K562 (cell line): ENCODE measurements at regions of chr5 and their contacts with region 1.

Region 1: DNA sequence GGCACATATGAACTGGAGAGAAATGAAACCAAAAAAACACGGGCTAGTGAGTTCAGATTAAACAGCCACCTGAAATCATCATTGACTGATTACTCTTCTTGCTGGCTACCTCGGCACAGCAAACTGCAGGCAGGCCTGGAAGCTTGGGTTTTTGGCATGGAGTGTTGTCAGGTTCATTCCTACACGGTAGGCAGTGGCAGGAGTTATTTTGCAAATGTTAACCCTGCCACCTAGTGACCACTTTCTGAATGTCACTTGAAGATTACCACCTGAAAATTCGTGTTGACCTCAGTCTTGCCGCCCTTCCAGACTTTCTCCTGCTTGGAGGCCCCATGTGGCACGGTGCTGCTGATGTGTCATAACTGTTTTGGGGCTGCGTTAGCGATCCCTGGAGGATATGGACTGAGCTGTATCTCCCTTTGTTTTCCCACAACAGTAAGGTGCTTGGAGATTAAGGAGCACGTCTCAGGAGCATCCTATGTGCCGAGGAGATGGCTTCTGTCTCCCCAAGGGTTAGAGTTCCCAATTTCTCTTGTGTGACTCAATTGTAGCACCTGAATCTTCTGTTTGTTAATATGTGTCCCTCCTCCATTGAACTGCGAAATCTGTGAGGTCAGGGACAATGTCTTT is 12.7 kb upstream of the CD180 start:
- DNase-seq: peak; percentile 60 to 76 (median 68)
- ATAC-seq: peak; percentile 88
- H3K4me3 ChIP-seq: no peak overlapping the region
- H3K27ac ChIP-seq: no peak overlapping the region
- H3K4me1 ChIP-seq: no peaks in the 10 kb centered on the region
- H3K27me3 ChIP-seq: peaks cover 8 to 25% of the 10 kb centered on the region in 2 experiments
- CTCF ChIP-seq: peak; percentile 71 to 85 (median 75)
- EP300 ChIP-seq: no peak
- POLR2A ChIP-seq: no peak
- RAD21 ChIP-seq: peak; percentile 78 to 89

Region 2: DNA sequence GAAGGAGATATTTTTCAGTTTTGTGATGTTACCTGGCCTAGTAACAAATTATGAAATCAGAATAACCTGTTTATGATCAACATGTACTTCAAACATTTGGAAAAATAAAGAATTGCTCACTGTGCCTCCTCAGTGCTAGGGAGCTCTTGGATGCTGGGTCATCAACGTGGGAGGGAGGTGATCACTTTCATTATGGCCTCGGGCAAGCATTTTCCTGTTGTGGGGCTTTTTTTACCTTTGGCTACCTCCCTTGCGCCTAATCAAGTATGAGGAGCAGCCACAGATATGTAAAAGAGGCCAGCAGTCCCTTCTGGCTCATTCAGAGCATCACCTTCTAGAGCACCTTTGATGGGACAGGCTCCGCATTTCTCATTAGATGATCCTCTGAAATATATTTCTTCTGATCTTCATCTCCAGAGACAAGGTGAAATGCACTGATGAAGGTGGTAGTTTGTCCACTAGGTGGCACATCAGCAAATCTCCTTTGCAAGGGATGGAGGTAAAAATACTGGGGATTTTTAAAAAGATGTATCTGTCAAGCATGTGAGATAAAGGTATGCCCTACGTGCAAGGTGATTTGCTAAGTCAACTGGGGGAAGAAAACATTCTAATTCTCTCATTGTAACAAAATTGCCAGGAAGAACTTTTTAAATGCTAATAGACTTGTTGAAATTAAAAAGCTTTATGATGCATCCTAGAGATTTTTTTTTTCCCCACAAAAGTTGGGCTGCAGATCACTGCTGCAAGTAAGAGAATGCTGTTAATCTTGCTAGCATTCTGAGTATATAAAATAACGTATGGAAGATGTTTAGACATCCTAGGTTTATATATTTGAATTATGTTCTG is 394.9 kb before region 1 on chr5:
- CTCF ChIA-PET with region 1: interaction called, 14 read pairs
- POLR2A ChIA-PET with region 1: no interaction called
- in situ Hi-C with region 1: no loop called
- intact Hi-C with region 1: loop called (anchors 1 kb)
- DNase-seq: peak; percentile 42 to 52 (median 48)
- ATAC-seq: peak; percentile 77
- H3K4me3 ChIP-seq: no peak overlapping the region
- H3K27ac ChIP-seq: no peak overlapping the region
- H3K4me1 ChIP-seq: no peaks in the 10 kb centered on the region
- H3K27me3 ChIP-seq: peaks cover 0 to 6% of the 10 kb centered on the region in 2 experiments; a peak in 2 of 5 replicates
- CTCF ChIP-seq: peak; percentile 46 to 67 (median 63); a peak in 5 of 6 replicates
- EP300 ChIP-seq: no peak
- POLR2A ChIP-seq: no peak
- RAD21 ChIP-seq: peak; percentile 50 to 60

Region 3: GRCh38 chr5:67156976-67157583 is 52.2 kb before region 1 on chr5:
- CTCF ChIA-PET with region 1: interaction called, 23 read pairs
- POLR2A ChIA-PET with region 1: no interaction called
- in situ Hi-C with region 1: no loop called
- intact Hi-C with region 1: loop called (anchors 1 kb)
- DNase-seq: peak; percentile 32 to 48 (median 46)
- ATAC-seq: peak; percentile 84
- H3K4me3 ChIP-seq: no peak overlapping the region
- H3K27ac ChIP-seq: no peak overlapping the region
- H3K4me1 ChIP-seq: no peaks in the 10 kb centered on the region
- H3K27me3 ChIP-seq: no peaks in the 10 kb centered on the region
- CTCF ChIP-seq: peak; percentile 38 to 69 (median 68)
- EP300 ChIP-seq: no peak
- POLR2A ChIP-seq: no peak
- RAD21 ChIP-seq: peak; percentile 52 to 69